Activated CD4-positive, alpha-beta memory T cell treated with anti-CD3 and anti-CD28 coated beads, Interleukin-2, amount 10 ng/mL, durations not matched to agents 7 days and 5 days (primary cell): ENCODE measurements at regions of chr16 and their contacts with region 1.

Region 1: DNA sequence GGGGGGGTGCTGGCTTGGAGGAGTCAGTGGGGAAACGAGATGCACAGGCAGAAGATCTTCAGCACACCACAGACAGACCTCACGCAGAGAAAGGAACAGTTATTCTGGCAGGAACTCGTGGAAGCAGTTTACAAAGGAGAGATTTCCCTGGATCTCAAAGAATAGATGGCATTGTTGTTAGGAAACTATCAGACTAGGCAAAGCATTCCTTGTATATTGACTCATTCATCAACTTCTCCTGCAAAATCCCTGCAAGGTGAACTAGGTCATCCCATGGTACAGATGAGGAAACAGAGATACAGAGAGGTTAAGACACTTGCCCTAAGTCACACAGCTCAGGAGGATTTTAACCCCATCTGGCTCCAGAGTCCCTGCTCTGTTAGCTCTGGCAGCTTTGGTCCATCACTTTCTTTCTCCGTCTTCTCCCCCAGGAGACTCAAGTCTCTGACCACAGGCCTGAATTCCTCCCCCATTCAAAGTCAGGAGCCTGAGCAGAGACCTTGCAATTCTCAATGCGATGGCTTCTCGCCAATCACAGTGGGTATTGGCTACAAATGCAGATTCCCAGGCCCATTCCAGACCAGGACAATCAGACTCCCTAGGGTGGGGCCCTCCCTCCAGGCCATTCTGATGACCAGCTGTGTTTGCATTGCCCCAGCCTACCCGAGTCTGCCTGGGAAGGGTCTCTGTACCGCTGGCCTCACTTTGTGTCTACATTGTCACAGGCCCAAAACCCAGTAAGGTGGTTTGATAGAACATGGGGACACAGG is 56.4 kb downstream of the LITAF start:
- DNase-seq: no peak
- H3K4me3 Mint-ChIP-seq: no peak overlapping the region
- H3K27ac Mint-ChIP-seq: no peak overlapping the region
- H3K4me1 Mint-ChIP-seq: peaks cover 5% of the 10 kb centered on the region
- H3K27me3 Mint-ChIP-seq: peaks cover 16% of the 10 kb centered on the region

Region 2: GRCh38 chr16:11651796-11652195 is 121.4 kb after region 1 on chr16:
- CTCF ChIA-PET with region 1: interaction called, 10 read pairs
- POLR2A ChIA-PET with region 1: no interaction called
- DNase-seq: no peak
- H3K4me3 Mint-ChIP-seq: no peak overlapping the region
- H3K27ac Mint-ChIP-seq: no peak overlapping the region
- H3K4me1 Mint-ChIP-seq: peaks cover 13% of the 10 kb centered on the region
- H3K27me3 Mint-ChIP-seq: peaks cover 26% of the 10 kb centered on the region

Region 3: DNA sequence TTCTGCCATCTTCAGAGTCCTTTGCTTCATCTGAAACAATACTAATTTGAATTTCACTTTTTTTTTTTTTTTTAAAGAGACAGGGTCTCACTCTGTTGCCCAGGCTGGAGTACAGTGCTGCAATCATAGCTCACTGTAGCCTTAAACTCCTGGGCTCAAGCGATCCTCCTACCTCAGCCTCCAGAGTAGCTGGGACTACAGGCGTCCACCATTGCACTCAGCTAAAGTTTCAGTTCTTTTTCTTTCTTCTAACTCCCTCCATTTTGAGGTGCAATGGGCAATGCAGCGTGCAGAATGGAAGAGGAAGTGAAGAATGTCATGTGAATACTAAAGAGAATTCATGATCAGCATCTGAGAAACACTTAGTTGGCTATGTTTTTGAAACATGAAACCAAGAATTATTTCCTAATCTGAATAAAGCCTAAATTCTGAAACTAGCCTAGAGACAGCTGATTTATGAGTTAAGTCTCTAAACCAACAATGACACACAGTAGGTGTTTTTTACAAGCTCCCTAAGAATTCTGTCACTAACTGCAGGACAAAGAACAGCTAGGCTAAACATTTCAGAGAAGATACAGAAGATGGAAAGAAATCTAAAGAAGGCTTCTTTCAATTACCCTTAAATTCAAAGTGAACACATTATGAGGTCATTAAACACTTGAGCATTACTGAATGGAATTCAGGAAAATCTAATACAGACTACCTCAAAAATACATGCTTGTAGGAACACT is 158.8 kb after region 1 on chr16:
- CTCF ChIA-PET with region 1: interaction called, 17 read pairs
- POLR2A ChIA-PET with region 1: no interaction called
- DNase-seq: no peak
- H3K4me3 Mint-ChIP-seq: no peak overlapping the region
- H3K27ac Mint-ChIP-seq: peak overlapping the region; percentile 58
- H3K4me1 Mint-ChIP-seq: peaks cover 23% of the 10 kb centered on the region
- H3K27me3 Mint-ChIP-seq: no peaks in the 10 kb centered on the region